GM18951 (cell line): ENCODE measurements at regions of chr15 and their contacts with region 1.

Region 1: GRCh38 chr15:74620636-74621545 is 5.3 kb downstream of the CLK3 start:
- POLR2A ChIP-seq: no peak

Region 2: GRCh38 chr15:74373731-74374647 is 246.9 kb before region 1 on chr15:
- in situ Hi-C with region 1: loop called (anchors 10 kb)
- POLR2A ChIP-seq: peak; percentile 57

Region 3: GRCh38 chr15:74692327-74692726 is 71.4 kb after region 1 on chr15:
- in situ Hi-C with region 1: no loop called
- POLR2A ChIP-seq: no peak

Region 4: DNA sequence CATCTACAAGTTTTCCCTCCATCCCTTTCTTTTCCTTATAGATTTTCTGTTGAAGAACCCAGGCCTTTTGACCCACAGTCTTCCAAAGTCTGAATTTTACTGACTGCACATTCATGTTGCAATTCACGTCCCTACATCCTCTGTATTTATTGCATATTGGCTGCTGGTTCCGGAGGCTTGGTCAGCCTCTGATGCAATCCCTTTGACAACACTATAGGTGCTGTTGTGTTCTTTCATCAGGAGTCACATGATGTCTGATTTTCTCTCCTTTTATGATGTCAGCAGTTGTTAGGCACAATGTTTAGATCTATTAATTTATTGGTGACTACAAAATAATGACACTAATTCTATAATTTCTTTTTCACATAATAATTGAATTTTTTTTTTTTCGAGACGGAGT is 95.8 kb after region 1 on chr15:
- in situ Hi-C with region 1: no loop called
- POLR2A ChIP-seq: no peak